Gastrocnemius medialis (tissue), 4 donors: ENCODE measurements at regions of chr7 and their contacts with region 1.

Region 1: GRCh38 chr7:44638611-44639557 is 32.5 kb downstream of the OGDH start:
- DNase-seq: peak in 1 of 2 donors; percentile 77
- ATAC-seq: peak in 1 of 2 donors; percentile 23
- H3K4me3 ChIP-seq: no peak overlapping the region
- H3K27ac ChIP-seq: peak overlapping the region; percentile 85 to 94 (median 92)
- H3K4me1 ChIP-seq: peaks cover 71 to 78% of the 10 kb centered on the region in 2 donors
- H3K27me3 ChIP-seq: no peaks in the 10 kb centered on the region
- CTCF ChIP-seq: no peak
- POLR2A ChIP-seq: peak; percentile 10 to 35

Region 2: GRCh38 chr7:44573464-44574286 is 65.2 kb before region 1 on chr7 and contains the start of gene DDX56:
- in situ Hi-C with region 1: no loop called
- intact Hi-C with region 1: no loop called
- DNase-seq: peak; percentile 92 to 93
- ATAC-seq: peak; percentile 99
- H3K4me3 ChIP-seq: peak within 1 kb of the TSS; percentile 88 to 99 (median 96)
- H3K27ac ChIP-seq: peak within 1 kb of the TSS; percentile 88 to 98 (median 93)
- H3K4me1 ChIP-seq: peaks cover 24 to 27% of the 10 kb centered on the region in 2 donors
- H3K27me3 ChIP-seq: no peaks in the 10 kb centered on the region
- CTCF ChIP-seq: no peak
- POLR2A ChIP-seq: peak; percentile 89 to 95
- total RNA-seq, gene DDX56: 57.7 to 73.2 (median 66.1) TPM

Region 3: DNA sequence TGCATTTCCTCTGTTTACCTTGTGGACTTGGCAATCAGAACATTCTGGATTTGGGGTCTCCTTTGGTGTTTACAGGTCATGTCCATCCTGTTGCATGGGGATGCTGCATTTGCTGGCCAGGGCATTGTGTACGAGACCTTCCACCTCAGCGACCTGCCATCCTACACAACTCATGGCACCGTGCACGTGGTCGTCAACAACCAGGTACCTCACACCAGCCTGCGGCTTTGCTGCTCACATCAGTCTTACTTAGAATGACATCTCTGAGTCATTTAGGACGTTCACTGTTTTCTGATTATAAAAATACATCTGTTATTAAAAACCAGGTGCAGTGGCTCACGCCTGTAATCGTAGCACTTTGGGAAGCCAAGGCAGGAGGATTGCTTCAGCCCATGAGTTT is 42.8 kb after region 1 on chr7:
- in situ Hi-C with region 1: no loop called
- intact Hi-C with region 1: loop called (anchors 2 kb)
- DNase-seq: peak in 1 of 2 donors; percentile 27
- ATAC-seq: peak; percentile 5 to 18
- H3K4me3 ChIP-seq: no peak overlapping the region
- H3K27ac ChIP-seq: peak overlapping the region; percentile 75 to 85 (median 82)
- H3K4me1 ChIP-seq: peaks cover 28 to 55% of the 10 kb centered on the region in 2 donors
- H3K27me3 ChIP-seq: no peaks in the 10 kb centered on the region
- CTCF ChIP-seq: no peak
- POLR2A ChIP-seq: no peak

Region 4: DNA sequence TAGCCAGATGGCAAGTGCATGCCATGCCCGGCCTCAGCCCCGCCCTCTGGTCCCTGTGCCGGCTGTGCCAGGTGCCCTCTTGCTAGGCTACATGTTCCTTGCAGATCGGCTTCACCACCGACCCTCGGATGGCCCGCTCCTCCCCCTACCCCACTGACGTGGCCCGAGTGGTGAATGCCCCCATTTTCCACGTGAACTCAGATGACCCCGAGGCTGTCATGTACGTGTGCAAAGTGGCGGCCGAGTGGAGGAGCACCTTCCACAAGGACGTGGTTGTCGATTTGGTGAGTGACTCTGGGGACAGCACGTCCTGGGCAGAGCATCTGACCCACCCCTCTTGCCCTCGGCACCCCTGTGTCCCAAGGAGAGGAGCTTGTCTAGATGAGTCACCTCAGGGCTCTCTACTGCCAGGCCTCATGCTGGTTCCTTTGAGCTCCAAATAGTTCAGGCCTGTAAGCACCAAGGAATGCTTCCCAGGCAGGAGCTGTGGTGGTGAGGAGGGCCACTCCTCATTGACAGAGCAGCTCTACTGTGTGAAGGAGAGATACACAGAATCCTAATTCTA is 54.9 kb after region 1 on chr7:
- in situ Hi-C with region 1: no loop called
- intact Hi-C with region 1: loop called (anchors 2 kb)
- DNase-seq: peak; percentile 91 to 97
- ATAC-seq: peak; percentile 90 to 96
- H3K4me3 ChIP-seq: peak overlapping the region in 1 of 4 donors; percentile 27
- H3K27ac ChIP-seq: peak overlapping the region; percentile 87 to 93 (median 90)
- H3K4me1 ChIP-seq: peaks cover 0 to 10% of the 10 kb centered on the region in 2 donors
- H3K27me3 ChIP-seq: no peaks in the 10 kb centered on the region
- CTCF ChIP-seq: no peak
- POLR2A ChIP-seq: peak; percentile 57 to 75